ENCODE measurements at regions of chr3 and their contacts with region 1.

Region 1: GRCh38 chr3:191328962-191329653 is at the start of gene CCDC50:
- DNase-seq: peak; percentile 70
- ATAC-seq: peak; percentile 75
- H3K4me3 Mint-ChIP-seq: peak within 1 kb of the TSS; percentile 93
- H3K27ac Mint-ChIP-seq: peak within 1 kb of the TSS; percentile 91
- H3K4me1 Mint-ChIP-seq: peaks cover 54% of the 10 kb centered on the region
- H3K27me3 Mint-ChIP-seq: no peaks in the 10 kb centered on the region
- CTCF ChIP-seq: no peak
- total RNA-seq, gene CCDC50: 144 and 153 TPM in 2 replicates

Region 2: GRCh38 chr3:191170097-191170496 is 159.0 kb before region 1 on chr3:
- CTCF ChIA-PET with region 1: no interaction called
- POLR2A ChIA-PET with region 1: no interaction called
- intact Hi-C with region 1: no loop called
- DNase-seq: no peak
- ATAC-seq: no peak
- H3K4me3 Mint-ChIP-seq: no peak overlapping the region
- H3K27ac Mint-ChIP-seq: no peak overlapping the region
- H3K4me1 Mint-ChIP-seq: peaks cover 10% of the 10 kb centered on the region
- H3K27me3 Mint-ChIP-seq: no peaks in the 10 kb centered on the region
- CTCF ChIP-seq: no peak

Region 3: GRCh38 chr3:191244242-191244867 is 84.8 kb before region 1 on chr3:
- CTCF ChIA-PET with region 1: interaction called, 11 read pairs
- POLR2A ChIA-PET with region 1: interaction called, 19 read pairs
- intact Hi-C with region 1: loop called (anchors 1 kb)
- DNase-seq: no peak
- ATAC-seq: peak; percentile 26
- H3K4me3 Mint-ChIP-seq: no peak overlapping the region
- H3K27ac Mint-ChIP-seq: no peak overlapping the region
- H3K4me1 Mint-ChIP-seq: peaks cover 40% of the 10 kb centered on the region
- H3K27me3 Mint-ChIP-seq: no peaks in the 10 kb centered on the region
- CTCF ChIP-seq: peak; percentile 76

Region 4: DNA sequence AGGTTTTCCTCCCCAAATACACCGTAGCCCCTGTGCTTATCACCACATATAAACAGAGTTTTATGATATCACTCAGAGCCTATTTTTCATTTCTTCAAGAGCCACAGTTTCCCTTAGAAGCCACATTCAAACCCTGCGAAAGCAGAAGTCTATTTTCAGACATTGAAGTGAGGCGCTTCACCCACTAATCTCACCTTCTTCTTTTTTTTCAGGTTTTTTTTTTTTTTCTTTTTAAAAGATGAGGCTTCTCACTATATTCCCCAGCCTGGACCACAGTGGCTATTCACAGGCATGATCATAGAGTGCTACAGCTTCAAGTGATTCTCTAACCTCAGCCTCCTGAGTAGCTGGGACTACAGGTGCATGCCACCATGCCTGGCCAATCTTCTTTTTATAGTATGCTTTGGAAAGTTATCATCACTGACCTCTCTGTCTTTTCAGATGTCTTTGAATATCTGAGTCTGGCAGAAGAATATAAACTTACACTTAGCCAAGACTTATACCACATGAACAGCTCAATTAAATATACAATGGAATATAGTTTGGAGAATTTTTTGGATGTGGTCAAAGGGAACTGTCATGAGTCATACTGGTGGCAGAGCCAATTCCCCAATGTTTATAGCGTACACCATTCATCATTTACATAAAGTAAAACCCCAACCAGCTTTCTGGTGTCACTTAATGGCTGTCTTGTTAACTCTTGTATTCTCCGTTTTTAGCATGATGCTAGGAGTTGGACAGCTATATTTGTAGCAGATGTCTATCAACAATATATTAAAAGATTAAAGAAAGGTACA is 59.6 kb before region 1 on chr3:
- CTCF ChIA-PET with region 1: no interaction called
- POLR2A ChIA-PET with region 1: interaction called, 10 read pairs
- intact Hi-C with region 1: loop called (anchors 2 kb)
- DNase-seq: no peak
- ATAC-seq: peak; percentile 64
- H3K4me3 Mint-ChIP-seq: peak overlapping the region; percentile 68
- H3K27ac Mint-ChIP-seq: peak overlapping the region; percentile 92
- H3K4me1 Mint-ChIP-seq: peaks cover 51% of the 10 kb centered on the region
- H3K27me3 Mint-ChIP-seq: no peaks in the 10 kb centered on the region
- CTCF ChIP-seq: no peak

Region 5: GRCh38 chr3:191290311-191291025 is 38.6 kb before region 1 on chr3:
- CTCF ChIA-PET with region 1: interaction called, 3 read pairs
- POLR2A ChIA-PET with region 1: interaction called, 16 read pairs
- intact Hi-C with region 1: no loop called
- DNase-seq: no peak
- ATAC-seq: peak; percentile 82
- H3K4me3 Mint-ChIP-seq: peak overlapping the region; percentile 74
- H3K27ac Mint-ChIP-seq: peak overlapping the region; percentile 96
- H3K4me1 Mint-ChIP-seq: peaks cover 40% of the 10 kb centered on the region
- H3K27me3 Mint-ChIP-seq: no peaks in the 10 kb centered on the region
- CTCF ChIP-seq: no peak

Region 6: DNA sequence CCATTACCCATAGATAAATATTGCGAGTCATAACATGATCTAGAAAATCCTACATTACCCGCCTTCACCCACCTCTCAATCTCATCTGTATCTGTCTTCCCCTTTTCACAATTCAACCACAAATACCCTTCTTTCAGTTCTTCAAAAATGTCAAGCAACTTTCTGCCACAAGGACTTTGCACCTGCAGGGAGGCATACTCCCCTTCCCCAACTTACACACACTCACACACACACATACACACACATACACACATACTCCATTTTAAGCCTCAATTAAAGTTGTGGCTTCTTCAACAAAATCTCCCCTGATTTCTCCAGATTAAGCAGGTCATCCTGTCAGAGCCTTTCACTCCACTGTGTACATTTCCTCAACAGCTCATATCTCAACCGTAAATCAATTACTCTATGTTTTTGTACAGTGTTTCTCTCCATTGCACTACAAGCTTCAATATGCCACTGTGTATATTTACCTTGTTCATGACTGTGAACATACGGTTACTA is 33.0 kb before region 1 on chr3:
- CTCF ChIA-PET with region 1: interaction called, 3 read pairs
- POLR2A ChIA-PET with region 1: interaction called, 33 read pairs
- intact Hi-C with region 1: loop called (anchors 1 kb)
- DNase-seq: no peak
- ATAC-seq: peak; percentile 77
- H3K4me3 Mint-ChIP-seq: no peak overlapping the region
- H3K27ac Mint-ChIP-seq: no peak overlapping the region
- H3K4me1 Mint-ChIP-seq: peaks cover 34% of the 10 kb centered on the region
- H3K27me3 Mint-ChIP-seq: no peaks in the 10 kb centered on the region
- CTCF ChIP-seq: no peak

Region 7: DNA sequence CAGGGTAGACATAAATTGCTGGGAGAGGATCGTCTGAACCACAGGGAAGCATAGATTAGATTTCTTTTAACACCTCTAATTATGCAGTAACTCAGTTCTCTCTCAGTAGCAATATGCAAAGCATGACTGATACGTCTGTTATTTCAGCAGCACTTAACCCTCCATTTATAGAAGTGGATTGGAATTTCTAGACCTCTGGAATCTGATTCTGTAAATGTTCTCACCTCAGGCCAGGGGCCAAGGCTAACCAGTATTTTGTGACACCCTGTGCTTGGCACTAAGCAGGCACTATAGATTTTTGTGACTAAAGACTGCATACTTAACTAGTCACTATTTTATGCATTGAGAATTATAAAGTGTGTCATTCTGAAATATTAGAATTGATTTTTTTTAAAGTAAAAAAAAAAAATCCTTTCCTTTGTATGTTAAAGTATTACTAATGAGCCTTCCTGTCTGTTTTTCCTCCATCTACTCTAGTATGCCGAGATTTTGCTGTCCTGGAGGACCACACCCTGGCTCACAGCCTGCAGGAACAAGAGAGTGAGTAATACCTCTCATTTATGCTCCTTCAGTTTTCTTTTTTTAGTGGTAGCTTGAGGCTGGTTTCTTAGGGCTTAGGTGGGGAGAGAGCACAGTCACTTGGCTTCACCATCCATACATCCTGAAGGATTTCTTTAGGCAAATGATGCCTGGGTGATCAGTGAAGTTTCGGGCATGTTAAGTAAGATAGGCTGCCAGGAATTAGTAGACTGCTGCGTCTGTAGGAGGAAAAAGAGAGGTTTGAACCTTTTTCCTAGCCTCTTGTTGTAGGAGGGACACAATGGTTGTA is 27.7 kb after region 1 on chr3:
- CTCF ChIA-PET with region 1: no interaction called
- POLR2A ChIA-PET with region 1: interaction called, 7 read pairs
- intact Hi-C with region 1: loop called (anchors 1 kb)
- DNase-seq: no peak
- ATAC-seq: no peak
- H3K4me3 Mint-ChIP-seq: no peak overlapping the region
- H3K27ac Mint-ChIP-seq: peak overlapping the region; percentile 84
- H3K4me1 Mint-ChIP-seq: peaks cover 57% of the 10 kb centered on the region
- H3K27me3 Mint-ChIP-seq: no peaks in the 10 kb centered on the region
- CTCF ChIP-seq: no peak

Region 8: GRCh38 chr3:191369616-191370010 is 40.5 kb after region 1 on chr3:
- CTCF ChIA-PET with region 1: no interaction called
- POLR2A ChIA-PET with region 1: no interaction called
- intact Hi-C with region 1: loop called (anchors 5 kb)
- DNase-seq: no peak
- ATAC-seq: no peak
- H3K4me3 Mint-ChIP-seq: no peak overlapping the region
- H3K27ac Mint-ChIP-seq: no peak overlapping the region
- H3K4me1 Mint-ChIP-seq: peaks cover 18% of the 10 kb centered on the region
- H3K27me3 Mint-ChIP-seq: no peaks in the 10 kb centered on the region
- CTCF ChIP-seq: no peak

Region 9: GRCh38 chr3:191549357-191549756 is 220.2 kb after region 1 on chr3:
- CTCF ChIA-PET with region 1: no interaction called
- POLR2A ChIA-PET with region 1: no interaction called
- intact Hi-C with region 1: no loop called
- DNase-seq: no peak
- ATAC-seq: no peak
- H3K4me3 Mint-ChIP-seq: no peak overlapping the region
- H3K27ac Mint-ChIP-seq: no peak overlapping the region
- H3K4me1 Mint-ChIP-seq: no peaks in the 10 kb centered on the region
- H3K27me3 Mint-ChIP-seq: no peaks in the 10 kb centered on the region
- CTCF ChIP-seq: no peak

Measured in activated B cell treated with CpG ODN at 0.5 μM for 24 hours (primary cell).